ENCODE measurements at regions of chr19 and their contacts with region 1.

Region 1: GRCh38 chr19:18450931-18451845 is 13.3 kb upstream of the ISYNA1 start:
- DNase-seq: peak; percentile 93
- H3K4me3 Mint-ChIP-seq: no peak overlapping the region
- H3K27ac Mint-ChIP-seq: no peak overlapping the region
- H3K4me1 Mint-ChIP-seq: no peaks in the 10 kb centered on the region
- H3K27me3 Mint-ChIP-seq: no peaks in the 10 kb centered on the region

Region 2: GRCh38 chr19:18437491-18438330 is 13.5 kb before region 1 on chr19 and contains the start of gene ISYNA1:
- CTCF ChIA-PET with region 1: interaction called, 16 read pairs
- intact Hi-C with region 1: no loop called
- DNase-seq: peak; percentile 31
- H3K4me3 Mint-ChIP-seq: peak within 1 kb of the TSS; percentile 54
- H3K27ac Mint-ChIP-seq: no peak within 1 kb of the TSS
- H3K4me1 Mint-ChIP-seq: peaks cover 32% of the 10 kb centered on the region
- H3K27me3 Mint-ChIP-seq: no peaks in the 10 kb centered on the region
- total RNA-seq, gene ISYNA1: 12.3 to 14.3 TPM

Region 3: GRCh38 chr19:18672606-18673337 is 221.6 kb after region 1 on chr19:
- CTCF ChIA-PET with region 1: interaction called, 3 read pairs
- intact Hi-C with region 1: loop called (anchors 5 kb)
- DNase-seq: no peak
- H3K4me3 Mint-ChIP-seq: no peak overlapping the region
- H3K27ac Mint-ChIP-seq: no peak overlapping the region
- H3K4me1 Mint-ChIP-seq: no peaks in the 10 kb centered on the region
- H3K27me3 Mint-ChIP-seq: no peaks in the 10 kb centered on the region